Common myeloid progenitor, CD34-positive (primary cell): ENCODE measurements at regions of chr3 and their contacts with region 1.

Region 1: DNA sequence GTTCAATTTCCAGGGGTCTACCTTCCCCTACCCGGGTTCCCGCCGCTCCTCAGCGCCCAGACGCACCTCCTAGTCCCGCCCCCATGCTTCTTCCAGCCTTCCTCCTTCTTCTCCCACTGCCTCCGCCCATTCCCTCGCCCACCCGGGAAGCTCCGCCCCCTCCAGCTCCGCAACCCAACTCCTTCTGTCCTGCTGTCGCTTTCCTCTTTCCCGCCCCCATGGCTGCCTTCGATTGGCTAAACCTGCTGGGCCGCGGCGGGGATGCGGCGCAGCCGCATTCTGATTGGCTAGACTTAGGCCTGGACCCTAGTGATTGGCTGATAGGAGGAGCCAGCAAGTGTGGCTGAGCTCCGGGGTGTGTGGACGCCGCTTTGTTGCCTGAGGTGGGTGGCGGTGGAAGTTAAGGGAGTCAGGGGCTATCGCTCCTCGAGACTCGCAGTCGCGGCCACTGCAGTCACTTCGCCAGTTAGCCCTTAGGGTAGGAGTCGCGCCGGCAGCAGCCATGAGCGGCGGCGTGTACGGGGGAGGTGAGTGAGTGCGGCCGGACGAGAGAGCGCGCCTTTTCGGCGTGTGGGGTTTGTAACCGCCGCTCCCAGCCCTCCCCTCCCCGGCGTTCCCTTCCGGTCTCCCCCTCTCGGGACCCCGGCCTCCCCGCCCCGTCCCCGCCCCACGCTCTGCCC is at the start of gene ACTL6A:
- DNase-seq: peak; percentile 99
- H3K4me3 ChIP-seq: peak within 1 kb of the TSS; percentile 65 to 99 (median 91)
- H3K27ac ChIP-seq: peak within 1 kb of the TSS; percentile 46 to 79
- H3K4me1 ChIP-seq: peaks cover 0 to 29% (median 12%) of the 10 kb centered on the region in 4 experiments
- H3K27me3 ChIP-seq: no peaks in the 10 kb centered on the region

Region 2: DNA sequence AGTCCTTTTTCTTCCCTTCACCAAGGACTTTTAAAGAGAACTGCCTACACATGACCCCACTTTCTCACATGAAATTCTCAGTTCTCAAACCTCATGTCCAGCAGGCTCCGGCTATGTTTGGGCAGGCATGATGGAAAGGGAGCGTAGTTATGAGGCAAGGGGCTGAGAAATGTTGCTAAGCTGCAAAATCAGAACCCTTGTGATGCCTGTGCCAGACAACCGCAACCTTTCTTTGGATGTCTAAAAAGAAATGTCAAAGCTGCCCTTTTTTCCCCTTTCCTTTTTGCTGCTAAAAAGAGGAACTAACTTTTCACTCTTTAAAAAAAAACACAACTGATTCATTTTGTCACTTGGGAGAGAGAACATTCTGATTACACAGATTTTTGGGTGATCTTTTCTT is 130.7 kb before region 1 on chr3:
- CTCF ChIA-PET with region 1: interaction called, 13 read pairs
- POLR2A ChIA-PET with region 1: no interaction called
- DNase-seq: peak; percentile 44 to 90 (median 88)
- H3K4me3 ChIP-seq: peak overlapping the region in 2 of 7 experiments; percentile 16 to 49
- H3K27ac ChIP-seq: peak overlapping the region in 1 of 2 experiments; percentile 11
- H3K4me1 ChIP-seq: peaks cover 23 to 46% (median 36%) of the 10 kb centered on the region in 4 experiments
- H3K27me3 ChIP-seq: no peaks in the 10 kb centered on the region

Region 3: GRCh38 chr3:179450901-179451264 is 111.8 kb before region 1 on chr3:
- CTCF ChIA-PET with region 1: interaction called, 37 read pairs
- POLR2A ChIA-PET with region 1: no interaction called
- DNase-seq: peak; percentile 20 to 76 (median 66)
- H3K4me3 ChIP-seq: peak overlapping the region; percentile 82 to 93 (median 85)
- H3K27ac ChIP-seq: peak overlapping the region; percentile 77 to 90
- H3K4me1 ChIP-seq: peaks cover 11 to 39% (median 23%) of the 10 kb centered on the region in 4 experiments
- H3K27me3 ChIP-seq: no peaks in the 10 kb centered on the region

Region 4: DNA sequence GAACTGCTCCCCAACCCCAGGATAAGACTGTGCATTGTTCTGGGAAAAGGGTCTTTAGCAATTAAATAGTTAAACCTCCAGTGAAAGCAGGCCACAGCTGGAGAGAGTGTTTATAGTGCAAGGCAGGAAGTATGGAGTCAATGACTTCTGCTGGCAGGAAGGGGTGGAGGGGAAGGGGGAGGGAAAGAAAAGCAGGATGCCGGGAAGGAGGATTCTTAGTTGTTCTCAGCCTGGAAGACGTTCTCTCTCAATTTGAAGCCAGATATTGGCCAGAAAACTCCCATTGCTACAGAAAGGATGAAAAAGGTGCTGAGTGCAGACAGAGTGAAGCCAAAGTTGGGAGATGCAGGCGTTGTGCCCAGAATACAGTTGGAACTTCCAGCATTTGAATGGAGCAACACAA is 35.7 kb before region 1 on chr3:
- CTCF ChIA-PET with region 1: no interaction called
- POLR2A ChIA-PET with region 1: no interaction called
- DNase-seq: peak in 1 of 3 donors; percentile 2
- H3K4me3 ChIP-seq: peak overlapping the region in 1 of 7 experiments; percentile 24
- H3K27ac ChIP-seq: no peak overlapping the region
- H3K4me1 ChIP-seq: peaks cover 4 to 13% (median 11%) of the 10 kb centered on the region in 4 experiments
- H3K27me3 ChIP-seq: no peaks in the 10 kb centered on the region